Dorsolateral prefrontal cortex (tissue), 120 donors: ENCODE measurements at regions of chr19 and their contacts with region 1.

Region 1: DNA sequence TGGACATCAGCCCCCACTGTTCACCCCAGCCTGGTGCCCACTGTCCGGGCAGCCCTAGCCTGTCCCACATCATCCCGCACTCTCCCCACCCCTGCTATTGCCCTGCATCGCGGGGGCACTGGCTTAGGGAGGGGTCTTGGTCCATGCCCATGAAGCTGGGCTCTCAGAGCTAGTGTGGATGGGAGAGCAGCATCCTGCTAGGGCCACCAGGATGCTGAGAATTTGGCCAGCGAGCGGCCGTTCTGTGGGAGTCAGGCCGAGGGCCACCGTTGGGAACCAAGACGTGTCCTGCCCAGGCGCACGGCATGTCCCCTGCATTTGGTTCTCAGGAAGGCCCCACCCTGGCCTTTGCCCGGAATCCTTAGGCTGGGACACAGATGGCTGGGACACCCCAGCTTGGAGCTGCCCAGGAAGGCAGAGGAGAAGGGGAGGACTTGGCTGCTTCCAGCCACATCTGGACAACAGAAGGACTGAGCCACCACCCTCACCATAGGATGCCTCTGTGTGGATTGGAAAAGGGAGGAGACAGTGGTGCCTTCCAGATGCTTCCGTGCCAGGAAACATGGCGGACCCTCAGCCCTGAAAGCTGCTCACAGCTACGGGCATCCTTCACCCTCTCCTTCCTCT is 14.6 kb downstream of the ADGRE5 start:
- DNase-seq: no peak
- H3K4me3 ChIP-seq: no peak overlapping the region
- H3K27ac ChIP-seq: no peak overlapping the region
- H3K27me3 ChIP-seq: no peaks in the 10 kb centered on the region
- CTCF ChIP-seq: no peak

Region 2: DNA sequence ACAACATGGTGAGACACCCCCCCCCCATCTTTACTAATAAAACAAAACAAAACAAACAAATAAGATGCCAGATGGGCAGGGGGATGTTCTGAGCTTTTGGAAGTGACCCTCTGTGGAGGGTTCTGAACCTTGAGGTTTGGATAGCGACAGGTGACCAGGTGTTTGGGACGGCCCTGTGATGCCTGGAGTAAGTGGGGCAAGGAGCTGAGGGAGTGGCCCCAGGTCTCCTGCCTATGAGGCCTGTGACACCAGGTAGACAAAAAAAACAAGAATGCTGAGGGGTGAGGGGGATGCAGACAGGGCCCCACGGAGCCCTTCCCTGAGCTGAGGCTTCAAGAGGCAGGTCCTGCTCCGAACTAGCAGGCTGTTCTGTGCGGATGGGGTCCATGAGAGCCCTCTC is 373.4 kb after region 1 on chr19:
- intact Hi-C with region 1: loop called in 1 of 2 experiments (anchors 5 kb)
- DNase-seq: no peak
- H3K4me3 ChIP-seq: no peak overlapping the region
- H3K27ac ChIP-seq: no peak overlapping the region
- H3K27me3 ChIP-seq: peaks cover 0 to 15% (median 0%) of the 10 kb centered on the region in 45 donors
- CTCF ChIP-seq: no peak